Naive thymus-derived CD4-positive, alpha-beta T cell (primary cell): ENCODE measurements at regions of chr17 and their contacts with region 1.

Region 1: GRCh38 chr17:65100316-65101140 is 36.6 kb upstream of the RGS9 start:
- DNase-seq: peak; percentile 61 to 87 (median 79)
- ATAC-seq: peak; percentile 96
- H3K4me3 ChIP-seq: peak overlapping the region; percentile 78
- H3K4me3 Mint-ChIP-seq: peak overlapping the region; percentile 77 to 92 (median 87)
- H3K27ac ChIP-seq: peak overlapping the region; percentile 66
- H3K27ac Mint-ChIP-seq: peak overlapping the region; percentile 62 to 93 (median 81)
- H3K4me1 ChIP-seq: peaks cover 6 to 10% of the 10 kb centered on the region in 2 donors
- H3K4me1 Mint-ChIP-seq: peaks cover 5 to 20% (median 17%) of the 10 kb centered on the region in 7 donors
- H3K27me3 ChIP-seq: no peaks in the 10 kb centered on the region
- H3K27me3 Mint-ChIP-seq: peaks cover 0 to 17% (median 0%) of the 10 kb centered on the region in 5 donors

Region 2: GRCh38 chr17:64063766-64064224 is 1036.7 kb before region 1 on chr17:
- CTCF ChIA-PET with region 1: no interaction called
- POLR2A ChIA-PET with region 1: no interaction called
- intact Hi-C with region 1: no loop called
- DNase-seq: peak; percentile 36 to 71 (median 56)
- ATAC-seq: peak; percentile 73
- H3K4me3 ChIP-seq: no peak overlapping the region
- H3K4me3 Mint-ChIP-seq: peak overlapping the region in 3 of 10 donors; percentile 33 to 64 (median 54)
- H3K27ac ChIP-seq: no peak overlapping the region
- H3K27ac Mint-ChIP-seq: peak overlapping the region in 5 of 9 donors; percentile 51 to 80 (median 69)
- H3K4me1 ChIP-seq: peaks cover 23 to 84% of the 10 kb centered on the region in 2 donors
- H3K4me1 Mint-ChIP-seq: peaks cover 40 to 88% (median 56%) of the 10 kb centered on the region in 7 donors
- H3K27me3 ChIP-seq: no peaks in the 10 kb centered on the region
- H3K27me3 Mint-ChIP-seq: no peaks in the 10 kb centered on the region

Region 3: GRCh38 chr17:64968652-64969501 is 131.7 kb before region 1 on chr17:
- CTCF ChIA-PET with region 1: interaction called, 25 read pairs
- POLR2A ChIA-PET with region 1: interaction called, 3 read pairs
- intact Hi-C with region 1: loop called in 1 of 2 experiments (anchors 2 kb)
- DNase-seq: peak in 3 of 9 donors; percentile 23 to 31 (median 27)
- ATAC-seq: peak; percentile 4
- H3K4me3 ChIP-seq: peak overlapping the region; percentile 19
- H3K4me3 Mint-ChIP-seq: peak overlapping the region; percentile 45 to 78 (median 66)
- H3K27ac ChIP-seq: peak overlapping the region; percentile 69
- H3K27ac Mint-ChIP-seq: peak overlapping the region; percentile 70 to 94 (median 85)
- H3K4me1 ChIP-seq: peaks cover 31 to 55% of the 10 kb centered on the region in 2 donors
- H3K4me1 Mint-ChIP-seq: peaks cover 27 to 70% (median 53%) of the 10 kb centered on the region in 7 donors
- H3K27me3 ChIP-seq: no peaks in the 10 kb centered on the region
- H3K27me3 Mint-ChIP-seq: no peaks in the 10 kb centered on the region

Region 4: GRCh38 chr17:64984851-64985521 is 115.5 kb before region 1 on chr17:
- CTCF ChIA-PET with region 1: no interaction called
- POLR2A ChIA-PET with region 1: interaction called, 3 read pairs
- intact Hi-C with region 1: loop called in 1 of 2 experiments (anchors 1 kb)
- DNase-seq: peak in 8 of 9 donors; percentile 37 to 86 (median 62)
- ATAC-seq: peak; percentile 60
- H3K4me3 ChIP-seq: peak overlapping the region; percentile 52
- H3K4me3 Mint-ChIP-seq: peak overlapping the region; percentile 76 to 96 (median 80)
- H3K27ac ChIP-seq: peak overlapping the region; percentile 88
- H3K27ac Mint-ChIP-seq: peak overlapping the region; percentile 96 to 100 (median 98)
- H3K4me1 ChIP-seq: peaks cover 24 to 35% of the 10 kb centered on the region in 2 donors
- H3K4me1 Mint-ChIP-seq: peaks cover 13 to 52% (median 32%) of the 10 kb centered on the region in 7 donors
- H3K27me3 ChIP-seq: no peaks in the 10 kb centered on the region
- H3K27me3 Mint-ChIP-seq: no peaks in the 10 kb centered on the region

Region 5: DNA sequence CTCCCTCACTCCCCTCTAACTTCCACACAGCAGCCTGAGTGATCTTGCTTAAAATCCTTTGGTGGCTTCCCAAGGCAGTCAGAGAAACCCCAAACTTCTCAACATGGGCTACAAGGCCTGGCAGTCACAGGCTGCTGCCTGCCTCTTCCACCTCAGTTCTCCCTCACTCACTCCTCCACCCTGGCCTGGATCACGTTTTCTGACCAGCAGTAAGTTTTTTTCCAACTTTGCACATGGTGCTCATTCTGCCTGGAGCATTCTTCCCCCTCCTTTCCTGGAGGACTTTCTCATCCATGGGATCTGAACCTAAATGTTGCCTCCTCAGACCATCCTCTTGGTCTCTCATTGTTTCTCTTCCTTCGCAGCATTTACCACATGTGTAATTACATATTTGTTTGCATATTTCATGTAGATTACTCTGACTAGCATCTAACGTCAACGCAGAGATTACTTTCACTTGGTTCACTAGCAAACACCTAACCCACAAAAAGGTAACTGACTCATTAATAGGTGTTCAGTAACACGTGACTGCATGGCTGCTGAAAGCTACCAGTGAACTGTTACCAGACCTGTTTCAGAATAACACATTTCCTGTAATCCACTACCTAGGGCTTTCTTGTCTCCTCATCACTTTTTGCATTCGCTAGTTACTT is 61.1 kb before region 1 on chr17:
- CTCF ChIA-PET with region 1: no interaction called
- POLR2A ChIA-PET with region 1: interaction called, 5 read pairs
- intact Hi-C with region 1: loop called in 1 of 2 experiments (anchors 5 kb)
- DNase-seq: peak in 7 of 9 donors; percentile 55 to 85 (median 77)
- ATAC-seq: peak; percentile 95
- H3K4me3 ChIP-seq: peak overlapping the region; percentile 18
- H3K4me3 Mint-ChIP-seq: peak overlapping the region; percentile 34 to 92 (median 78)
- H3K27ac ChIP-seq: peak overlapping the region; percentile 79
- H3K27ac Mint-ChIP-seq: peak overlapping the region; percentile 78 to 97 (median 93)
- H3K4me1 ChIP-seq: peaks cover 55 to 68% of the 10 kb centered on the region in 2 donors
- H3K4me1 Mint-ChIP-seq: peaks cover 67 to 90% (median 83%) of the 10 kb centered on the region in 7 donors
- H3K27me3 ChIP-seq: no peaks in the 10 kb centered on the region
- H3K27me3 Mint-ChIP-seq: no peaks in the 10 kb centered on the region

Region 6: DNA sequence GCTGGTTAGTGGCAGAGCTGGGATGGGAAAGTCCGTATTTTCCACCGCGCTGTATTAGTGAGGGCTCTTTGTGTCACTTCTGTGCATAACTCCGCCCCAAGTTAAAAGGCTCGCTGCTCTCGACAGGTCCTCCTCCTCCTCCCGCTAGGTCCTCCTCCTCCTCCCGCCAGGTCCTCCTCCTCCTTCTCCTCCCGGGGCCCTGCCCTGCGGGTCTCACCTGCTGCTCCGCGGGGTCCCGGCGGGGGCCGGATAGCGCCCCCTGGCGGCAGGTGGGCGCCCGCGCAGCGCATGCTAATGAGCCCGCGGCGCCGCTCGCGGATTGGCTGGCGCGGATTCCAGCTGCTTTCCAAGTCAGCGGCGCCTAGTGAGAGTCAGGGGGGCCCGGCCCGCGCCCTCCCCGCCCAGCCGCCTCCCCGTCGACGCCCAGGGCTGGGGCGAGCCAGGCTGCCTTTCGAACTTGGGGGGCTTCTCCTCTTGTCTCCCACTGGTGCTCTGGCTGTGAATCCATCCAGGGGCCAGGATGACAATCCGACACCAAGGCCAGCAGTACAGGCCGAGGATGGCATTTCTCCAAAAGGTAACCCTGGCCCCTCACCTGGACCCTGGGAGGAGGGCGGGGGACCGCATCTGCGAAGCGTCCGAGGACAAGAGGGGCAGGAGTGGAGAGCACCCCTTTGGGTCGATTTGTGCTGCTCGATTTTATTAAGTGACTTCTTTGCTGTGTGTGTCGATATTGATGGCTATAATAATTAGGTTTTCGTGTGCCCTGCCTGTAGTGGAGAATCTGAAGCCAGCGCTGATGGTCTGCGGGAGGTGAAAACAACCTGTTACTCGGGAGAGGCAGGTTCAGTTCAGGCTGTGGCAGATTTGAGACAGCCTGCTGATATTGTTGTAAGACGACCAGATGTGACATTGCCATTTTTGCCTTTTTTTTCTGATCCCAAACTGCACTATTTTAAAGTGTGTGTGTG is 36.8 kb after region 1 on chr17 and contains the start of gene RGS9:
- CTCF ChIA-PET with region 1: no interaction called
- POLR2A ChIA-PET with region 1: no interaction called
- intact Hi-C with region 1: loop called (anchors 1 to 5 kb)
- DNase-seq: peak; percentile 77 to 90 (median 86)
- ATAC-seq: peak; percentile 99
- H3K4me3 ChIP-seq: peak within 1 kb of the TSS; percentile 69
- H3K4me3 Mint-ChIP-seq: peak within 1 kb of the TSS; percentile 67 to 91 (median 82)
- H3K27ac ChIP-seq: peak within 1 kb of the TSS; percentile 56
- H3K27ac Mint-ChIP-seq: peak within 1 kb of the TSS; percentile 45 to 87 (median 75)
- H3K4me1 ChIP-seq: peaks cover 12 to 27% of the 10 kb centered on the region in 2 donors
- H3K4me1 Mint-ChIP-seq: peaks cover 10 to 40% (median 22%) of the 10 kb centered on the region in 7 donors
- H3K27me3 ChIP-seq: no peaks in the 10 kb centered on the region
- H3K27me3 Mint-ChIP-seq: peaks cover 8 to 31% (median 18%) of the 10 kb centered on the region in 5 donors
- total RNA-seq, gene RGS9: 0.32 to 3.9 (median 0.81) TPM

Region 7: GRCh38 chr17:65147955-65148354 is 47.4 kb after region 1 on chr17:
- CTCF ChIA-PET with region 1: no interaction called
- POLR2A ChIA-PET with region 1: no interaction called
- intact Hi-C with region 1: no loop called
- DNase-seq: no peak
- ATAC-seq: no peak
- H3K4me3 ChIP-seq: no peak overlapping the region
- H3K4me3 Mint-ChIP-seq: no peak overlapping the region
- H3K27ac ChIP-seq: no peak overlapping the region
- H3K27ac Mint-ChIP-seq: no peak overlapping the region
- H3K4me1 ChIP-seq: peaks cover 0 to 1% of the 10 kb centered on the region in 2 donors
- H3K4me1 Mint-ChIP-seq: no peaks in the 10 kb centered on the region
- H3K27me3 ChIP-seq: no peaks in the 10 kb centered on the region
- H3K27me3 Mint-ChIP-seq: peaks cover 0 to 16% (median 0%) of the 10 kb centered on the region in 5 donors

Region 8: DNA sequence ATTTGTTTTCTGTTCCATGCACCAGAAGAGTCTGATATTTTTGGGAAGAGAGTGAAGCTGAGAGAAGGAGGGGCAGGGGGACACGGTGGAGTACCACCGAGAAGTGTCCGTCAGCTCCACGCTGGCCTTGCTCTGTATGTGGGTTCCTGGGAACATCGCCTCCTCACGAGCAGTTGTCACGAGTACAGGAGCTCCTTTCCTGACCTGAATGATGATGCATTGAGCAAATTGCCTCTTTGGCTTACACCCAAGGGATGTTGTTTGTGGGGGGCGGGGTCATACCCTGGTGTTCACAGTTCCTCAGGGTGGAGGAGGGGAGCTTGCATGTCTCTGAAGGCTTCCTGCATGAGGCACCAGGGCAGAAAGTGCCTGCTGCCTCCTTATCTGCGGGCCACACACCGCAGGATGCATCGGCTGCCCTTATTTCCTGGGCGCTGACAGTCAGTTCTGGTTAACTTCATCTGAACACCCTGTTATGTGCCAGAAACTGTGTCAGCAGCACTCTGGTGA is 72.8 kb after region 1 on chr17:
- CTCF ChIA-PET with region 1: no interaction called
- POLR2A ChIA-PET with region 1: no interaction called
- intact Hi-C with region 1: no loop called
- DNase-seq: peak; percentile 16 to 73 (median 60)
- ATAC-seq: peak; percentile 90
- H3K4me3 ChIP-seq: peak overlapping the region; percentile 8
- H3K4me3 Mint-ChIP-seq: peak overlapping the region in 6 of 10 donors; percentile 49 to 63 (median 56)
- H3K27ac ChIP-seq: peak overlapping the region; percentile 9
- H3K27ac Mint-ChIP-seq: peak overlapping the region in 4 of 9 donors; percentile 26 to 74 (median 42)
- H3K4me1 ChIP-seq: peaks cover 13 to 34% of the 10 kb centered on the region in 2 donors
- H3K4me1 Mint-ChIP-seq: peaks cover 0 to 35% (median 11%) of the 10 kb centered on the region in 7 donors
- H3K27me3 ChIP-seq: no peaks in the 10 kb centered on the region
- H3K27me3 Mint-ChIP-seq: peaks cover 0 to 4% (median 0%) of the 10 kb centered on the region in 5 donors